Thyroid gland (tissue), 4 donors: ENCODE measurements at regions of chr19 and their contacts with region 1.

Region 1: DNA sequence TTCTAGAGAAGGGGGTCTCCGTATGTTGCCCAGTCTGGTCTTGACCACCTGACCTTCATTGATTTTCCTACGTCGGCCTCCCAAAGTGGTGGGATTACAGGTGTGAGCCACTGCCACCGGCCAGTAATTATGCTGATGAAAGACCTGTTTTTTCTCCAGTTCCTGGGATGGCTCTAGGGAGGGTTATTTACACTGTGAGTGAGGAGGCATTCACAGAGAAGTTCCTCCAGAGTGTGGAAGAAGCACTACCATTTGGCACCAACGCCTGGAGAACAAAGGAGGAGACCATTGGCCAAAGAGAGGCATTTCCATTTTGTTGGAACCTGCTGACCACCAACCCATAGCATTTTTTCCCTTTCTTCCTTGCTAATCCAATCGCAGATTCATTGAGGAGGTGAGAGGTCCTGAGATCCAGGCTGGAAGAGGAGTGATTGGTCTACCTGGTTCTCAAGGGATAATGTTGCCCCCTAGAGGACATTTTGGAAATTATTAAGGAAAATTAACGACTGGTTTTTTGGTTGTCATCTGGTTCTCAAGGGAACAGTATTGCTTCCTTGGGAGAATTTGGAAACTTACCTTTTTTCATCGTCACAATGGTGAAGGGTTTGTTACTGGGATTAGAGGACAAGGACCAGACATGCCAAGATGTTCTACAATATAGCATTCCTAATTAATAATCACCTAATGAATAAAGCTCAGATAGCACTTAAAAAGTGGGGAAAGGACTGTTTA is 5.5 kb upstream of the SAE1 start:
- DNase-seq: no peak
- H3K4me3 ChIP-seq: no peak overlapping the region
- H3K27ac ChIP-seq: no peak overlapping the region
- H3K4me1 ChIP-seq: peaks cover 0 to 3% of the 10 kb centered on the region in 2 donors
- H3K27me3 ChIP-seq: no peaks in the 10 kb centered on the region
- CTCF ChIP-seq: peak in 4 of 6 experiments; percentile 70 to 90 (median 77)
- POLR2A ChIP-seq: no peak

Region 2: DNA sequence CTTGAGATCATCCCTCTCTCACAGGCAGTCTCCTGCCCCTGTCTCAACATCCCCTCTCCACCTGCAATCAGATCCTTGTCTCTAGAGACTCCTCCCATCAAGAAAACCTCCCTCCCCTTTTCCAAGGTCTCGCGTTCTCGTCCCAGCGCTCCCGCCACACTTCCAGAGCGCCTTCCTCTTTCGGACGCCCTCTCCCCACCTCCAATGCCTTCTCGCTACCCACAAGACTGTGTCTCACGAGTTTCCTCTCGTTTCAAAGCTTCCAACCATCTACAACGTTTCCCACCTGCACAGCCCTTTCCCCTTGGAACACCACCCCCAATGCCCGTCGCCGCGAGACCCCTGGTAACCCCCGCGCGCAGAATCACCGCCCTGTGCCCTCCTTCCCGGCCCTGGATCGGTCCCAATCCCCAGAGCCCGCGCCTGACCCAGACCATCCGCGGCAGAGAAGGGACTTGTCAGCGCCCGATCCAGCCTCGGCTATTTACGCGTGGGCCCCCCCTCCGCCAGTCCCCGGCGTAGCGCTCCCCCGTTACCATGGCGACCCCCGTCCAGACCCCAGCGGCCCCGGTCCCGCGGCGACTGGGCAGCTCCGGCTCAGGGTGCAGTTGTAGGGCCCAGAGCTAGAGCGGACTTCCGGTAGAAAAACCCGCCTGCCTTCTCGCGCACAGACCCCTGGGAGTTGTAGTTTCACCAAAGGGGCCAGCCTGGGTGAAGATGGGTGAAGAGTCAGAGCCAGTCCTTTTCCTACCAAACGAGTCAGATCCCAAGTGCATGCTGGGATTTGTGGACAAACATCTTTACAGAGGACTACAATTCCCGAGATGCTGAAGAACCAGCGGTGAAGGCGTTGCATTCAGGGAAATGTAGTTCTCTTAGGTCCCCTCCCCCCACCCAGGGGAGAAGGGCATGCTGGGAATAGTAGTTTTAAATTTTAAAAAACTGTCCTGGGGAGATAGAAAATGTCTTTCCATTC is 274.6 kb before region 1 on chr19 and contains the start of gene AP2S1:
- intact Hi-C with region 1: loop called (anchors 5 kb)
- DNase-seq: peak; percentile 95
- H3K4me3 ChIP-seq: peak within 1 kb of the TSS; percentile 59 to 85 (median 82)
- H3K27ac ChIP-seq: peak within 1 kb of the TSS; percentile 38 to 74 (median 59)
- H3K4me1 ChIP-seq: peaks cover 8 to 16% of the 10 kb centered on the region in 2 donors
- H3K27me3 ChIP-seq: no peaks in the 10 kb centered on the region
- CTCF ChIP-seq: no peak
- POLR2A ChIP-seq: peak in 1 of 2 donors; percentile 74
- total RNA-seq, gene AP2S1: 29.8 to 98.4 (median 64.1) TPM

Region 3: GRCh38 chr19:47019431-47020041 is 105.6 kb before region 1 on chr19 and contains the start of gene NPAS1:
- intact Hi-C with region 1: loop called (anchors 5 kb)
- DNase-seq: no peak
- H3K4me3 ChIP-seq: peak within 1 kb of the TSS in 1 of 3 donors; percentile 12
- H3K27ac ChIP-seq: no peak within 1 kb of the TSS
- H3K4me1 ChIP-seq: peaks cover 7 to 30% of the 10 kb centered on the region in 2 donors
- H3K27me3 ChIP-seq: peaks cover 31% of the 10 kb centered on the region
- CTCF ChIP-seq: no peak
- POLR2A ChIP-seq: no peak
- total RNA-seq, gene NPAS1: 0.56 to 0.71 TPM in 2 of 4 donors, not detected in the others

Region 4: DNA sequence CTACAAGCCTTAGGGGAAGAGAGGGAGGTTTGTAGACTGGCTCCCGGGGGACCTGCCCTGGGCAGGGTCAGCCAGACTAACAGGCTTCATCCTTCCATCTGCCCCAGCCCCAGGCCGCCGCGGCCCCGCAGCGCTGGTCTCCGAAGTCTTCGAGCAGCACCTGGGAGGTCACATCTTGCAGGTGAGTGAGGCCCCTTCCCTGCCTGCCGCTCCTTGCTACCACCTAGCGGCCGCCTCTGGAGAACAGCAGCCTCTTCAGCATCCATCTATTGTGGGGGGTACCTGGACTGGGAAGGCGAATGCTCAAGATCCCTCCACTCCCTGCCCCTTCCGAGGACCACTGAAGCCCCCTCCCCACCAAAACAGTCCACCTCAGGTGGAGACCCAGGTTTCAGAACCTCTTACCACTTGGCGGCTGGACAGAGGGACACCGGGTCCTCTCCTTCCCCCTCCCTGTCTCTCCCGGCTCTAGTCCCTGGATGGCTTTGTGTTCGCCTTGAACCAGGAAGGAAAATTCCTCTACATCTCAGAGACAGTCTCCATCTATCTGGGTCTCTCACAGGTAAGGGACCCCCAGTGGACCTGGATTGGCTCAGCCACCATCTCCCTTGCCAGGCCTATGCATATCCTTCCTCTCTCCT is 92.8 kb before region 1 on chr19:
- intact Hi-C with region 1: loop called (anchors 2 kb)
- DNase-seq: peak; percentile 58 to 67
- H3K4me3 ChIP-seq: no peak overlapping the region
- H3K27ac ChIP-seq: no peak overlapping the region
- H3K4me1 ChIP-seq: peaks cover 5 to 11% of the 10 kb centered on the region in 2 donors
- H3K27me3 ChIP-seq: peaks cover 9% of the 10 kb centered on the region
- CTCF ChIP-seq: peak; percentile 62 to 89 (median 71)
- POLR2A ChIP-seq: no peak

Region 5: DNA sequence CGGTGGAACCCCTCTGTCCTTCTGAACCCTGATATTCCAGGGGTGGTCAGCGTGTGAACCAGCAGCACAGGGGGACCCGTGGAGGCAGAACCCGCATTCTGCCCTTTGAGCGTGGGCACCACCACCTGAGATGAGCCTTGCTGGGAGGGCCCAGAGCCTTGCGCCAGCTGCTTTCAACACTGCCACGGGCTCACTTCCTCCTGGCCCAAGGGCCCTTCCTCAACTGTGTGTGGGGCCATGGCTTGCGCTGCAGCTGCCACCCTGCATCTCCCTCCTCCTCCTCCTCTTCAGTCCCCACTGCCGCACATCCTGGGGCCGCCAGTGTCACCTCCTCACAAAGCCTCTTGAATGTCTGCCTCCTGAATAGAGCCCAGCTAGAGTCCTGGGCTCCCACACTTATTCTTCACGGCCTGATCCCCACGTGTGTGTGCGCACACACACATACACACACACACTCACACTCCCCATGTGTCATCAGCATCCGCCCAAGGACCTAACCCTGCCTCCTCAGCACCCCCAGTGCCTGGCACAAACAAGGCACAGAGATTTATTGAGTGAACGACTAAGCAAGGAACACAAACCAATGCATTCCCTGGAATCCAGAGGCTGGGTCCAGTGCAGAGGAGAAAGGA is 49.8 kb before region 1 on chr19:
- intact Hi-C with region 1: loop called (anchors 2 kb)
- DNase-seq: no peak
- H3K4me3 ChIP-seq: no peak overlapping the region
- H3K27ac ChIP-seq: peak overlapping the region in 2 of 3 donors; percentile 39 to 43
- H3K4me1 ChIP-seq: peaks cover 10 to 16% of the 10 kb centered on the region in 2 donors
- H3K27me3 ChIP-seq: no peaks in the 10 kb centered on the region
- CTCF ChIP-seq: no peak
- POLR2A ChIP-seq: no peak

Region 6: GRCh38 chr19:47243776-47244547 is 118.9 kb after region 1 on chr19:
- intact Hi-C with region 1: no loop called
- DNase-seq: peak; percentile 83 to 86
- H3K4me3 ChIP-seq: no peak overlapping the region
- H3K27ac ChIP-seq: no peak overlapping the region
- H3K4me1 ChIP-seq: peaks cover 11 to 38% of the 10 kb centered on the region in 2 donors
- H3K27me3 ChIP-seq: no peaks in the 10 kb centered on the region
- CTCF ChIP-seq: peak; percentile 94 to 99 (median 98)
- POLR2A ChIP-seq: no peak